PC-9 (cell line): ENCODE measurements at regions of chr11 and their contacts with region 1.

Region 1: GRCh38 chr11:64304316-64305072 is 830 bp upstream of the ESRRA start:
- DNase-seq: peak; percentile 81 to 95
- H3K4me3 ChIP-seq: peak overlapping the region; percentile 74
- H3K27ac ChIP-seq: peak overlapping the region; percentile 71
- H3K4me1 ChIP-seq: peaks cover 27% of the 10 kb centered on the region
- H3K27me3 ChIP-seq: 0 out of 2 replicates have a peak, but pooled peaks cover 7% of the 10 kb centered on the region
- CTCF ChIP-seq: peak; percentile 97

Region 2: GRCh38 chr11:63838678-63839507 is 465.6 kb before region 1 on chr11 and contains the start of gene MARK2:
- CTCF ChIA-PET with region 1: no interaction called
- POLR2A ChIA-PET with region 1: interaction called, 3 read pairs
- intact Hi-C with region 1: loop called (anchors 10 kb)
- DNase-seq: peak; percentile 96 to 99
- H3K4me3 ChIP-seq: peak within 1 kb of the TSS; percentile 90
- H3K27ac ChIP-seq: peak within 1 kb of the TSS; percentile 39
- H3K4me1 ChIP-seq: peaks cover 53% of the 10 kb centered on the region
- H3K27me3 ChIP-seq: no peaks in the 10 kb centered on the region
- CTCF ChIP-seq: no peak
- total RNA-seq, gene MARK2: 53.8 and 65.0 TPM in 2 replicates

Region 3: GRCh38 chr11:64001510-64002420 is 302.7 kb before region 1 on chr11:
- CTCF ChIA-PET with region 1: no interaction called
- POLR2A ChIA-PET with region 1: interaction called, 10 read pairs
- intact Hi-C with region 1: no loop called
- DNase-seq: no peak
- H3K4me3 ChIP-seq: no peak overlapping the region
- H3K27ac ChIP-seq: no peak overlapping the region
- H3K4me1 ChIP-seq: no peaks in the 10 kb centered on the region
- H3K27me3 ChIP-seq: no peaks in the 10 kb centered on the region
- CTCF ChIP-seq: no peak

Region 4: GRCh38 chr11:64240394-64241174 is 63.9 kb before region 1 on chr11 and contains the start of gene FKBP2:
- CTCF ChIA-PET with region 1: interaction called, 11 read pairs
- POLR2A ChIA-PET with region 1: no interaction called
- intact Hi-C with region 1: loop called (anchors 2 kb)
- DNase-seq: peak; percentile 97 to 98
- H3K4me3 ChIP-seq: peak within 1 kb of the TSS; percentile 90
- H3K27ac ChIP-seq: peak within 1 kb of the TSS; percentile 97
- H3K4me1 ChIP-seq: peaks cover 46% of the 10 kb centered on the region
- H3K27me3 ChIP-seq: no peaks in the 10 kb centered on the region
- CTCF ChIP-seq: no peak
- total RNA-seq, gene FKBP2: 84.2 and 93.2 TPM in 2 replicates

Region 5: GRCh38 chr11:64276653-64277431 is 27.7 kb before region 1 on chr11:
- CTCF ChIA-PET with region 1: interaction called, 13 read pairs
- POLR2A ChIA-PET with region 1: interaction called, 7 read pairs
- intact Hi-C with region 1: no loop called
- DNase-seq: peak; percentile 85 to 97
- H3K4me3 ChIP-seq: no peak overlapping the region
- H3K27ac ChIP-seq: peak overlapping the region; percentile 41
- H3K4me1 ChIP-seq: peaks cover 28% of the 10 kb centered on the region
- H3K27me3 ChIP-seq: no peaks in the 10 kb centered on the region
- CTCF ChIP-seq: no peak

Region 6: DNA sequence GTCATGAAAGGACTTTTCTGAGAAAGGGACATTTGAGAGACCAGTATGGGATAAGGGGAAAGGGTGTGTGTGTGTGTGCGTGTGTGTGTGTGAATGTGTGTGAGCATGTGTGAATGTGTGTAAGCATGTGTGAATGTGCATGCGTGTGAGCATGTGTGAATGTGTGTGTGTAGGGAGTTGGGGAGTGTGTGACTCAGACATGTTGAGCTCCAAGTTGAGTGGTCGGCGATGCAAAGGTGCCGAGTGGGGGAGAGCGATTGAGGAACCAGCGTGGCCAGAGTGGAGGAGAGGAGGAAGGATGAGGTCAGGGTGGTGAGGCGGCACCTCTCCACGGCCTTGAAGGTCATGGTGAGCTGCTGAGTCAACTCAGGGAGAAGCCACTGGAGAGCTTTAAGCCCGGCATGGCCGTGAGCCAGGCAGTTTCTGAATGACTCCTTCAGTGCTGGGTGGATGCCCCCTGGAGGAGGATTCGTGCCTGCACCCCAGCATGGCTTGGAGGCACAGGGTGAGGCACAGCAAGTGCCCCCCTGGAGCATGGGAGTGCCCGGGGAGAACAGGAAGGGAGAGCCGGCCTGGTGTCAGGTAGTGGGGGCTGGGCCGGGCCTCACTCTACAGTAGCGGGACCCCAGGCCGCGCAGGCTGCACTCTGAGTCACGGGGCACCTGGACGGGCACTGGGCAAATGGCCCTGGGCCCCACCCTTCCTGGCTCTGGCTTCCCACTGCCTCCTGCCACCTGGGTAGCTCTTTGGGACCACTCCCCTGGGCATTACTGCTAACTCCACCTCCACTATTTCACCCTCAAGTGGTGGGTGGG is 27.3 kb after region 1 on chr11:
- CTCF ChIA-PET with region 1: interaction called, 20 read pairs
- POLR2A ChIA-PET with region 1: interaction called, 12 read pairs
- intact Hi-C with region 1: loop called (anchors 1 kb)
- DNase-seq: peak; percentile 97 to 99
- H3K4me3 ChIP-seq: no peak overlapping the region; the same call in 1 of the 2 replicates
- H3K27ac ChIP-seq: peak overlapping the region; percentile 83
- H3K4me1 ChIP-seq: peaks cover 51% of the 10 kb centered on the region
- H3K27me3 ChIP-seq: no peaks in the 10 kb centered on the region
- CTCF ChIP-seq: peak; percentile 88

Region 7: GRCh38 chr11:64538501-64539294 is 234.2 kb after region 1 on chr11:
- CTCF ChIA-PET with region 1: no interaction called
- POLR2A ChIA-PET with region 1: no interaction called
- intact Hi-C with region 1: no loop called
- DNase-seq: no peak
- H3K4me3 ChIP-seq: no peak overlapping the region
- H3K27ac ChIP-seq: no peak overlapping the region
- H3K4me1 ChIP-seq: peaks cover 6% of the 10 kb centered on the region; the same call in 1 of the 2 replicates
- H3K27me3 ChIP-seq: peaks cover 28% of the 10 kb centered on the region
- CTCF ChIP-seq: no peak